Motor neuron (in vitro differentiated cells): ENCODE measurements at regions of chr1 and their contacts with region 1.

Region 1: GRCh38 chr1:204971517-204972336 is 71.3 kb upstream of the CNTN2 start:
- ATAC-seq: peak in 4 of 8 experiments; percentile 26 to 96 (median 76)
- H3K4me3 ChIP-seq: no peak overlapping the region
- H3K27ac ChIP-seq: no peak overlapping the region
- H3K4me1 ChIP-seq: peaks cover 13 to 17% of the 10 kb centered on the region in 2 donors

Region 2: GRCh38 chr1:204363335-204364124 is 608.2 kb before region 1 on chr1:
- in situ Hi-C with region 1: no loop called
- ATAC-seq: peak in 6 of 8 experiments; percentile 2 to 73 (median 34)
- H3K4me3 ChIP-seq: peak overlapping the region in 4 of 5 donors; percentile 3 to 18 (median 12)
- H3K27ac ChIP-seq: peak overlapping the region; percentile 0 to 19
- H3K4me1 ChIP-seq: peaks cover 18% of the 10 kb centered on the region in 2 donors

Region 3: GRCh38 chr1:204889681-204890383 is 81.9 kb before region 1 on chr1:
- in situ Hi-C with region 1: no loop called
- ATAC-seq: peak; percentile 69 to 98 (median 82)
- H3K4me3 ChIP-seq: no peak overlapping the region
- H3K27ac ChIP-seq: peak overlapping the region; percentile 24 to 80
- H3K4me1 ChIP-seq: peaks cover 15 to 25% of the 10 kb centered on the region in 2 donors

Region 4: GRCh38 chr1:205061665-205062069 is 89.9 kb after region 1 on chr1:
- in situ Hi-C with region 1: loop called in 1 of 9 experiments (anchors 25 kb)
- ATAC-seq: peak; percentile 67 to 89 (median 78)
- H3K4me3 ChIP-seq: no peak overlapping the region
- H3K27ac ChIP-seq: no peak overlapping the region
- H3K4me1 ChIP-seq: peaks cover 13 to 22% of the 10 kb centered on the region in 2 donors